CD4-positive, alpha-beta memory T cell (primary cell): ENCODE measurements at regions of chr1 and their contacts with region 1.

Region 1: DNA sequence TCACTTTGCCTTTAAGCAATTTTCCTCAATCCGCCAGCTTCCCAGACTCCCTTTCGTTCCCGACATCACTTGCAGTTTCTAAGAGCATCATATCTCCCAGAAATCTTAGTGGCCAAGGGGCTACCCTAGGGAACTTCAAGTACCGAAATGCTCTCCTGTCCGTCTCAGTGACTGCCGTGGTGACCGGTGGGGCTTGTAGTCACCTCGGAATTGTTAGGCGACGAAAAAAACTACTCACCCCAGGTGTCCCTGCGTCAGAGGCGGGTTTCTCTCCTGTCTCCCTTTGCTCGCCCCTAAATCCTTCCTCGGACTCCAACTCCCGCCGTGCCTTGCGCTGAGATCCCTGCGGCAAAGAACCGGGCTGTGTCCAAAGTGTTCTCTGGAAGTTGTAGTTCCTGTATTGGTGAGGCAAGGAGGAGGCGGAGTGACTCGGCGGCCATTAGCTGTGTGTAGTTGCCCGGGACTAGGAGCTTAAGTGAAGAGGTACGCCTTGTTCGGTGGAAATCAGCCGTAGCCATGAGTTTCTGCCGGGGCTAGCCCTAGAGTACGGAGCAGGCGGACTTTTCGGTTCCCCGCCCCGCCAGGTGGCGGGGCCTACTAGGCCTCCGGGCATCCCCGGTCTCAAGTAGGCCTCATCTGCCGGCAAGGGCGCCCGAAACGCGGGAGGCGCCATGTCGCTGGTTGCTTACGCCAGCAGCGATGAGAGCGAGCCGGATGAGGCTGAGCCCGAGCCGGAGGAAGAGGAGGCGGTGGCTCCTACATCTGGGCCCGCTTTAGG is at the start of gene PRCC:
- DNase-seq: peak; percentile 97 to 100 (median 99)
- H3K4me3 ChIP-seq: peak within 1 kb of the TSS; percentile 98 to 99
- H3K4me3 Mint-ChIP-seq: no peak within 1 kb of the TSS
- H3K27ac ChIP-seq: peak within 1 kb of the TSS; percentile 98
- H3K27ac Mint-ChIP-seq: no peak within 1 kb of the TSS
- H3K4me1 ChIP-seq: peaks cover 48% of the 10 kb centered on the region
- H3K4me1 Mint-ChIP-seq: peaks cover 24 to 39% (median 34%) of the 10 kb centered on the region in 4 donors
- H3K27me3 ChIP-seq: no peaks in the 10 kb centered on the region
- H3K27me3 Mint-ChIP-seq: no peaks in the 10 kb centered on the region
- total RNA-seq, gene PRCC: 60.9 to 61.3 TPM

Region 2: GRCh38 chr1:156338180-156338973 is 428.9 kb before region 1 on chr1 and contains the starts of genes CCT3 and TSACC:
- CTCF ChIA-PET with region 1: no interaction called
- POLR2A ChIA-PET with region 1: no interaction called
- intact Hi-C with region 1: loop called (anchors 1 kb)
- DNase-seq: peak; percentile 100
- H3K4me3 ChIP-seq: peak within 1 kb of the TSS; percentile 94 to 95
- H3K4me3 Mint-ChIP-seq: peak within 1 kb of the TSS; percentile 94 to 99 (median 98)
- H3K27ac ChIP-seq: peak within 1 kb of the TSS; percentile 75
- H3K27ac Mint-ChIP-seq: peak within 1 kb of the TSS; percentile 91 to 100 (median 99)
- H3K4me1 ChIP-seq: peaks cover 28% of the 10 kb centered on the region
- H3K4me1 Mint-ChIP-seq: peaks cover 22 to 46% (median 35%) of the 10 kb centered on the region in 4 donors
- H3K27me3 ChIP-seq: no peaks in the 10 kb centered on the region
- H3K27me3 Mint-ChIP-seq: peaks cover 0 to 1% of the 10 kb centered on the region in 2 donors
- total RNA-seq, gene CCT3: 109 TPM
- total RNA-seq, gene TSACC: not detected

Region 3: GRCh38 chr1:156740679-156741612 is 26.3 kb before region 1 on chr1 and contains the start of gene MRPL24:
- CTCF ChIA-PET with region 1: interaction called, 8 read pairs
- POLR2A ChIA-PET with region 1: interaction called, 158 read pairs
- intact Hi-C with region 1: loop called (anchors 1 kb)
- DNase-seq: peak; percentile 96 to 100 (median 99)
- H3K4me3 ChIP-seq: peak within 1 kb of the TSS; percentile 83 to 89
- H3K4me3 Mint-ChIP-seq: peak within 1 kb of the TSS; percentile 94 to 99 (median 96)
- H3K27ac ChIP-seq: peak within 1 kb of the TSS; percentile 84
- H3K27ac Mint-ChIP-seq: peak within 1 kb of the TSS; percentile 91 to 100 (median 98)
- H3K4me1 ChIP-seq: peaks cover 25% of the 10 kb centered on the region
- H3K4me1 Mint-ChIP-seq: peaks cover 18 to 45% (median 32%) of the 10 kb centered on the region in 4 donors
- H3K27me3 ChIP-seq: no peaks in the 10 kb centered on the region
- H3K27me3 Mint-ChIP-seq: no peaks in the 10 kb centered on the region
- total RNA-seq, gene MRPL24: 44.1 to 47.4 TPM

Region 4: DNA sequence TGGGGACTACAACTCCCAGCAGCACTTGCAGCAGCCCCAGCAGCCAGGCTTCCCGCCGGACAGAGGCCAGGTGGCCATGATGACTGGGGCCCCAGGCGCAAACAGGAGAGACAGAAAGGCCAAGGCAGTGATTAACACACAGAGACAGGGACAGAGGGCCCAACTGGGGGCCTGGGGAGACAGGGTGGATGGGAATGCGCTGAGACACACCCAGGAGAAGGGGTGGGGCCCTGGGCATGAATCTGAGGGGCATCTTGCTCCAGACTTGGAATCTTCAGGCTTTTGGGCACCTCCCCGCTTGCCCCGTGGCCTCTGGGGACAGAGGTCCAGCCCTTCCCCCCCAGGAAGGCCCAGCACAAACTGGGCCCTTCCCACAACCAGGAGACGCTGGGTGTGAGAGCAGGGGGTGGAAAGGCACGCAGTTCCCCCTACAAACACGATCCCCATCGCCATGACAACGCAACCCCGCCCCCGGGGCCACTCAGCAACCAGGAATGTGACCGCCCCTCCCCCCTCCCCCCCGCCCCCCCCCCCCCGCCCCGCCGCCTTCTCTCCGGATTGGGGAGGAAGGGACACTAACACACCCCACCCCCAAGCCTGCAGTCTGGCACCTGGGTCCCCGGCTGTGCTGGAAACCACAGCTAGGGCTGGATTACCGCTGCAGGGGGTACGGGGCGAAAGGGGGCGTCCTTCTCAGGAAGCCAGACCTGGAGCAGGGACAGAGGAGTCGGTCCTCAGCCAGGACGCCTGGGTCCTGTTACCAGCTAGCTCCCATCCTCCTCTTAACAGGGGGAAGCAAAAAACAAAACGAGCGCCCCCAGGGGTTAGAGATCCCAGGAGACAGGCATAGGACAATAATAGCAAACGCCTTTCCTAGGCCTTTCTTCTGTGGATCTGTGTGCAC is 20.3 kb before region 1 on chr1:
- CTCF ChIA-PET with region 1: interaction called, 4 read pairs
- POLR2A ChIA-PET with region 1: interaction called, 158 read pairs
- intact Hi-C with region 1: loop called (anchors 1 kb)
- DNase-seq: peak; percentile 34 to 79 (median 47)
- H3K4me3 ChIP-seq: peak overlapping the region; percentile 13 to 57
- H3K4me3 Mint-ChIP-seq: peak overlapping the region; percentile 84 to 98 (median 92)
- H3K27ac ChIP-seq: peak overlapping the region; percentile 75
- H3K27ac Mint-ChIP-seq: peak overlapping the region; percentile 87 to 95 (median 94)
- H3K4me1 ChIP-seq: peaks cover 46% of the 10 kb centered on the region
- H3K4me1 Mint-ChIP-seq: peaks cover 42 to 69% (median 50%) of the 10 kb centered on the region in 4 donors
- H3K27me3 ChIP-seq: no peaks in the 10 kb centered on the region
- H3K27me3 Mint-ChIP-seq: no peaks in the 10 kb centered on the region

Region 5: DNA sequence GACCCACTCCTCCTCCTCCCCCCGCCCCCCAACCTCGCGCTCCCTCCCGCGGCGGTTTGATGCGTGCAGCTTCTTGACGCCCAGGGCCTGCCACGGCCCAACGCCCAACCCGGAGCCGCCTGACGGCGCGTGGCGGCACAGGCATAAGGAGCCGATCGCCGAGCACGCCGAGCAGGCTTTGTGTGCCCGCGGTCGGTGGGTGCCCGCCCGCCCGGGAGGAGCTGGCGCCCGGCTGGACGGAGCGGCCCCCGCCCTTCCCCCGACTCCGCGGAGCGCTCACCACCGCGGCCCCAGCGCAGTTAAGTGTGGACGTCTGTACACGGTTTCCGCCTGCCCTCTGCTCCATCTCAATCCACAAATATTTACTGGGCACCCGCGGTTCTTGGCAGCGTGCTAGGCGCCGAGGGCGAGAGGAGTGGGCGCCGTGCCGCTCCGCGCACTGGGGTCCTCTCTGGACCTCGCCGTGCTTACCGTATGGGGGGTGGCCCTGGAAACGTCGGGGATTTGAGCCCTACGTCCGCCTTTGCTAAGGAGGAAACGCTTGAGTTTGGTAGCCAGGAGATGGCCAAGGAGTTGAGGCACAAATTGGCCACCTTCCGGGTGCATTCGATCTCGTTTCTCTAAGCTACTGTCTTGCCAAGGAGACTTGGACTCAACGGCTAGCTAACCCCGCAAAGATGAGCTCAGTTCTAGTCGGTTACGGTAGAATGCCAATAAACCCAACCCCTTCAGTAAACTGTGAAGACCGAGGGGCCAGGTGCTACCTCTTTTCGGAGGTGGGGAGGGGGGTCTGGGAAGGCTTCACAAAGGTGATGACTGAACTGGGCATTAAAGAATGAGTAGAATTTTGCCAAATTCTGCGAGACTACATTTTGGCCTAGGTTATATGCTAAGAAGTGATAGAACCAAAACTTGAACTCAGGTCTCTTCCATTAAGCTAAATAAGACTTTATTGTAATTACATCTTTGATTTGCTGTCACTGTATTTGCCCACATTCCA is 15.2 kb before region 1 on chr1:
- CTCF ChIA-PET with region 1: interaction called, 4 read pairs
- POLR2A ChIA-PET with region 1: interaction called, 97 read pairs
- intact Hi-C with region 1: loop called (anchors 1 kb)
- DNase-seq: peak; percentile 91 to 98 (median 93)
- H3K4me3 ChIP-seq: peak overlapping the region; percentile 42 to 88
- H3K4me3 Mint-ChIP-seq: peak overlapping the region; percentile 87 to 97 (median 92)
- H3K27ac ChIP-seq: peak overlapping the region; percentile 82
- H3K27ac Mint-ChIP-seq: peak overlapping the region; percentile 84 to 95 (median 92)
- H3K4me1 ChIP-seq: peaks cover 43% of the 10 kb centered on the region
- H3K4me1 Mint-ChIP-seq: peaks cover 36 to 61% (median 46%) of the 10 kb centered on the region in 4 donors
- H3K27me3 ChIP-seq: no peaks in the 10 kb centered on the region
- H3K27me3 Mint-ChIP-seq: no peaks in the 10 kb centered on the region

Region 6: GRCh38 chr1:157034137-157034800 is 267.0 kb after region 1 on chr1:
- CTCF ChIA-PET with region 1: no interaction called
- POLR2A ChIA-PET with region 1: no interaction called
- intact Hi-C with region 1: no loop called
- DNase-seq: no peak
- H3K4me3 ChIP-seq: no peak overlapping the region
- H3K4me3 Mint-ChIP-seq: no peak overlapping the region
- H3K27ac ChIP-seq: no peak overlapping the region
- H3K27ac Mint-ChIP-seq: no peak overlapping the region
- H3K4me1 ChIP-seq: no peaks in the 10 kb centered on the region
- H3K4me1 Mint-ChIP-seq: no peaks in the 10 kb centered on the region
- H3K27me3 ChIP-seq: no peaks in the 10 kb centered on the region
- H3K27me3 Mint-ChIP-seq: peaks cover 11 to 17% of the 10 kb centered on the region in 2 donors

Region 7: DNA sequence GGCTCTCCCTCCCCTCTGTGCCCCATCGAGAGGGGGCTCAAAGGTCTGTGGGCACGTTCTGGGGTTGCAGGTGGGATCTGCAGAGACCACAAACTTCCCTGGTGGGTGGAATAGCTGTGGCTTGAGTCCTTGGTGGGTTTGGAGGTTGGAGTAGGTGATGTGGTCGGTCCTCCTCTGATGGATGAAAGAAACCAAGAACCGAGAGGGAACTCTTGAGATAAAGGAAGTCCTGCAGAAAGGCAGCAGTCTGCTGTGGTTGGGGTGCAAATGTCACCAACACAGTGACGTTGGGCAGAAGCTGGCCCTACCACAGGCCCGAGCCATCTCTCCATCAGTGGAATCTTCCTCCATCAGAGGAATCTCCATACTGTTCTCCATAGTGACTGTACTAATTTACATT is 613.2 kb after region 1 on chr1:
- CTCF ChIA-PET with region 1: no interaction called
- POLR2A ChIA-PET with region 1: no interaction called
- intact Hi-C with region 1: no loop called
- DNase-seq: no peak
- H3K4me3 ChIP-seq: no peak overlapping the region
- H3K4me3 Mint-ChIP-seq: no peak overlapping the region
- H3K27ac ChIP-seq: no peak overlapping the region
- H3K27ac Mint-ChIP-seq: peak overlapping the region in 1 of 7 donors; percentile 42
- H3K4me1 ChIP-seq: no peaks in the 10 kb centered on the region
- H3K4me1 Mint-ChIP-seq: no peaks in the 10 kb centered on the region
- H3K27me3 ChIP-seq: no peaks in the 10 kb centered on the region
- H3K27me3 Mint-ChIP-seq: peaks cover 14 to 23% of the 10 kb centered on the region in 2 donors